Activated B cell treated with CpG ODN at 0.5 μM for 24 hours (primary cell): ENCODE measurements at regions of chrX and their contacts with region 1.

Region 1: DNA sequence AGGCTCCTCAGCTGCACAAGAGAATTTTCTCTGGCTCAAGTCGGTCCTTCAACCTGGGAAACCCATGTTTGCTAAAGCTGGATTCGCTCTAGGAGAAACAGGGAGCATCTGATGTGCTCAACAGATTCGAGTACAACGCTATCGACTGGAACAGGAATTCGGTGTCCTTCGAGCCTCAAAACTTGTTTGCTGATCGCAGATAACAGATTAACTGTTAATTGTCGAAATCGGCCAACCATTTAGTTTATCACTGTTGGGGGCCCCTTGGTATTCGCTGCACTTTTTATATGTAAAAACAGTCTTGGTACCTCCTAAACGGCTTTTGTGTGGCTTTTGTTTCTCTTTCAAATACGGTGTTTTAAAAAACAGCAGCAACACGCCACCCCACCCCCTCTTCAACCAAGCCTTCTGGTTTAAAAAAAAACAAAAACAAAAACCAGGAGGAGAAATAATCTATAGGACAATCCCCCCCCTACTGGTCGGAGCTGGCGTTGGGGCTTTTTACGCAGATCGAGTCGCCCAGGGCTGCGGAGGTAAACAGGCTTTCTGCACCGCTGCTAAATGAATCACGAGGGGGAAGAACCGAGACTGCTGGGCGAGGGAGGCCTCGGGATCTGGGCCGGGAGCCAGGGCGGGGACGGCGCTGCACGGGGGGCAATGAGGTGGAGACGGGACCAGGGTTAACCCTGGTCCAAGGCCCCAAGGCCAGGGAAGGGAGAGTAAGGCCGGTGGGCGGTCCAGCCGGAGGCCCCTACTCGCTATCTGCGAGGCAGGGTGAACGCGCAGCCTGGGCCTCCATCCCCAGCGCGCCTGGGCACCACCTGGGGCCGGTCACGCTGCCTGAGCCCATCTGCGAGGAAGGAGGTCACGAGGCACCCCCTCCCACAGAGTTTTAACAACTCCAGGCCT is 71.7 kb upstream of the BCOR start:
- DNase-seq: peak; percentile 63
- ATAC-seq: peak; percentile 59
- H3K4me3 Mint-ChIP-seq: peak overlapping the region; percentile 88
- H3K27ac Mint-ChIP-seq: peak overlapping the region; percentile 98
- H3K4me1 Mint-ChIP-seq: peaks cover 69% of the 10 kb centered on the region
- H3K27me3 Mint-ChIP-seq: no peaks in the 10 kb centered on the region
- CTCF ChIP-seq: no peak

Region 2: GRCh38 chrX:39338583-39338982 is 830.9 kb before region 1 on chrX:
- CTCF ChIA-PET with region 1: no interaction called
- POLR2A ChIA-PET with region 1: no interaction called
- intact Hi-C with region 1: no loop called
- DNase-seq: no peak
- ATAC-seq: no peak
- H3K4me3 Mint-ChIP-seq: no peak overlapping the region
- H3K27ac Mint-ChIP-seq: no peak overlapping the region
- H3K4me1 Mint-ChIP-seq: peaks cover 23% of the 10 kb centered on the region
- H3K27me3 Mint-ChIP-seq: peaks cover 7% of the 10 kb centered on the region
- CTCF ChIP-seq: no peak

Region 3: DNA sequence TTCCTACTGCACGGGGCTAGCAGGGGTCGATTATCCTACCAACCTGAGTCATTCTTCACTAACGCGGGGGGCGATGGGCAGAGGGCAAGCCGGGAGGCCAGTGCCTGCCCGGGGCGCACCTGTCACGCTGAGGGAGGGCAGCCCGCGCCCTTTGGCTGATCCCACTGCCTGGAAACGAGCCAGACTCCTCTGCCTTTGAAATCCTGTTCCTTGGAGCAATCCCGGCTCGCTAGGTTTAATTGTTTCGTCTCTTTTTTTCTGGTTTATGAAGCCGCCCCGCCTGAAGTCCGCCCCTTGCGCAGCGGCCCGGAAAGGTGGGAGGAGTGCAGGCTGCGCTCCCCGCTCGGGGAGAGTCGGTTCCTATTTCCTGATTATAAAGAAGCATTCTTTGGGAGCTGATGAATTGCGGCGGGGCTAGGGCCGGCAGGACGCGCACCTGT is 555.9 kb before region 1 on chrX:
- CTCF ChIA-PET with region 1: no interaction called
- POLR2A ChIA-PET with region 1: no interaction called
- intact Hi-C with region 1: loop called (anchors 5 kb)
- DNase-seq: peak; percentile 14
- ATAC-seq: peak; percentile 23
- H3K4me3 Mint-ChIP-seq: peak overlapping the region; percentile 67
- H3K27ac Mint-ChIP-seq: no peak overlapping the region
- H3K4me1 Mint-ChIP-seq: peaks cover 27% of the 10 kb centered on the region
- H3K27me3 Mint-ChIP-seq: peaks cover 22% of the 10 kb centered on the region
- CTCF ChIP-seq: no peak

Region 4: DNA sequence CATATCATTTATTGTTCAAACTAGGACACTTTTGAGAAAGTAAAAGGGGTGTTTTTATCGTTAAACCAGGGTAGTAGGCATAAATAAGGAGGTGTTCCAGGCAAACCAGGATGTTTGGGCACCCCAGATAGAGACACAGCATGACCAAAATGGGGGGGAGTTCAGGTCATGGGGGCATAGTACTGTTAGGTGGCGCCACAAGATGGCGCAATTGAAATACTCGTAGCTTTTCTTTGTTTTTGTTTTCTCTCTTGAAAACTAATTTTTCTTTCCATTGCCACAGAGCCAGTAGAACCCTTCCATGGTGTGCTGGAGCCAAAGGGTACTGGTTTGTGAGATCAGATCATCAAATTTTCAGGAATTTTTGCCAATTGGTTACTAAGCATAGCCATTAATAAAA is 355.1 kb before region 1 on chrX:
- CTCF ChIA-PET with region 1: no interaction called
- POLR2A ChIA-PET with region 1: no interaction called
- intact Hi-C with region 1: loop called (anchors 2 kb)
- DNase-seq: no peak
- ATAC-seq: no peak
- H3K4me3 Mint-ChIP-seq: no peak overlapping the region
- H3K27ac Mint-ChIP-seq: no peak overlapping the region
- H3K4me1 Mint-ChIP-seq: peaks cover 8% of the 10 kb centered on the region
- H3K27me3 Mint-ChIP-seq: peaks cover 11% of the 10 kb centered on the region
- CTCF ChIP-seq: no peak

Region 5: DNA sequence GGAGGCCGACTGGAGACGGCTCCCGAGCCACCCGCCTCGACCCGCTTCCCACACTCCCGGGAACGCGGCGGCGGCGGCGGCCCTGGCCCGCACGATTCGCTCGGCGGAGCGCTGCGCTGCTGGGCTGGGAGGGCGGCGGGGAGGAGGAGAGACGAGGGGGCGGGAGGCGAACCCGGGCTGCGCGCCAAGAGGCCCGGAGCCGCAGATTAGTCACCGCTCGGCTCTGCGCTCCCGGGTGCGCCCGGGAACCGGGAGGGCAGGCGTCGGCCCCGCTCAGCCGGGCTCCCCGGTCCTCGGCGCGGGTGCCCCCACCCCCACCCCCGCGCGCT is 60.5 kb before region 1 on chrX:
- CTCF ChIA-PET with region 1: interaction called, 3 read pairs
- POLR2A ChIA-PET with region 1: interaction called, 30 read pairs
- intact Hi-C with region 1: no loop called
- DNase-seq: peak; percentile 44
- ATAC-seq: peak; percentile 29
- H3K4me3 Mint-ChIP-seq: peak overlapping the region; percentile 64
- H3K27ac Mint-ChIP-seq: no peak overlapping the region
- H3K4me1 Mint-ChIP-seq: peaks cover 18% of the 10 kb centered on the region
- H3K27me3 Mint-ChIP-seq: no peaks in the 10 kb centered on the region
- CTCF ChIP-seq: no peak

Region 6: GRCh38 chrX:40207626-40208025 is 38.2 kb after region 1 on chrX:
- CTCF ChIA-PET with region 1: no interaction called
- POLR2A ChIA-PET with region 1: interaction called, 4 read pairs
- intact Hi-C with region 1: loop called (anchors 5 kb)
- DNase-seq: no peak
- ATAC-seq: peak; percentile 45
- H3K4me3 Mint-ChIP-seq: no peak overlapping the region
- H3K27ac Mint-ChIP-seq: no peak overlapping the region
- H3K4me1 Mint-ChIP-seq: peaks cover 12% of the 10 kb centered on the region
- H3K27me3 Mint-ChIP-seq: no peaks in the 10 kb centered on the region
- CTCF ChIP-seq: no peak

Region 7: DNA sequence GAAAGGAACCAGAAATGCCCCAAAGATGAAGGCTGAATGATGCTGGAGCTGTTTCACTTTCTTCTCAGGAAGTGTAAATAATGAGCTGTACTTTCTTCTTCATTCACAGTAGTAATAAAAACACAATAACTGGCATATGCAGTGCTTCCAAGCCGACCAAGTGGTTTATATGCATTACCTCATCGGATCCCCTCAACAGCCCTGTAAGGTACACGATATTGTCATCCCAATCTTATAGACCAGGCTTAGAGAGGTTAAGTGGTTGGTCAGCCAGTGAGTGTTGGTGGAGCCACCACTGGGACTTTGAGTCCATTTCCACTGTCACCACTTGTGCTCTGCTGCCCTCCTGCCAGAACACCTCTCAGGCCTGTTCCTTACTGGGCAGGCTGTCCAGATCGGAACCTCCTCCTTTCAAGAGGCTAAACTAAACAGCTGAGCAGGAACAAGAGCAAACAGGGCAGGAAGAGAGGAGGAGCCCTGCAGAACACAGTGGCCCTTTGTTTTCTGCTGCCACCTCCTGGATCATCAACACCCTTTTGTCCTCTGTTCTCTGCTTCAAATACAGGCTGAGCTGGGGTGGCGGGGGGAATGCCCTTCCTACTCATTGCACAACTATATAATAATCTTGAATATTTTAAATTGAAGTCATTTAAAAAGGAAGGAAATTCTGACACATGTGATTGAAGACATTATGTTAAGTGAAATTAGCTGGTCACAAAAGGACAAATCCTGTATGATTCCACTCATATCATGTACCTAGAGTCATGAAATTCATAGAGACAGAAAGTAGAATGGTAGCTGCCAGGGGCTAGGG is 298.8 kb after region 1 on chrX:
- CTCF ChIA-PET with region 1: no interaction called
- POLR2A ChIA-PET with region 1: no interaction called
- intact Hi-C with region 1: loop called (anchors 5 kb)
- DNase-seq: no peak
- ATAC-seq: peak; percentile 66
- H3K4me3 Mint-ChIP-seq: no peak overlapping the region
- H3K27ac Mint-ChIP-seq: no peak overlapping the region
- H3K4me1 Mint-ChIP-seq: peaks cover 23% of the 10 kb centered on the region
- H3K27me3 Mint-ChIP-seq: peaks cover 12% of the 10 kb centered on the region
- CTCF ChIP-seq: no peak